CD8-positive, alpha-beta memory T cell (primary cell): ENCODE measurements at regions of chr19 and their contacts with region 1.

Region 1: DNA sequence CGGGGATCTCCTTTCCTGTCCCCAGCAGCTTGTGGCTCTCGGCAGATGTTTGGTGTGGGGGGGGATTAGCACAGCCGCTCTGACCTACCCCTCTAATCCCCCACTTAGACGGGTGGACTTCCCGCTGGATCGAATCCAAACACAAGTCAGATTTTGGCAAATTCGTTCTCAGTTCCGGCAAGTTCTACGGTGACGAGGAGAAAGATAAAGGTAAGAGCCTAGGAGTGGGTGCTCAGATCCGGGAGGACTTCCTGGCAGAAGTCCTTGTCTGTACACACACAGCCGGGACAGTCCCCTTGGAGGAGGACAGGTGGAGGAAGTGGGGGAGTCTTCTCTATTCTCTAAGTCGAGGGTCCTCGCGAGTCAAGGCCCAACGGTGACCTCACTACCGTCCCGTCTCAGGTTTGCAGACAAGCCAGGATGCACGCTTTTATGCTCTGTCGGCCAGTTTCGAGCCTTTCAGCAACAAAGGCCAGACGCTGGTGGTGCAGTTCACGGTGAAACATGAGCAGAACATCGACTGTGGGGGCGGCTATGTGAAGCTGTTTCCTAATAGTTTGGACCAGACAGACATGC is 705 bp downstream of the CALR start:
- DNase-seq: peak in 4 of 5 donors; percentile 19 to 62 (median 39)
- H3K4me3 ChIP-seq: peak overlapping the region; percentile 81
- H3K4me3 Mint-ChIP-seq: peak overlapping the region; percentile 94 to 99 (median 99)
- H3K27ac ChIP-seq: peak overlapping the region; percentile 93
- H3K27ac Mint-ChIP-seq: peak overlapping the region; percentile 91 to 100 (median 97)
- H3K4me1 ChIP-seq: peaks cover 39% of the 10 kb centered on the region
- H3K4me1 Mint-ChIP-seq: peaks cover 36 to 61% (median 40%) of the 10 kb centered on the region in 3 donors
- H3K27me3 ChIP-seq: no peaks in the 10 kb centered on the region
- H3K27me3 Mint-ChIP-seq: peaks cover 0 to 4% of the 10 kb centered on the region in 2 donors

Region 2: DNA sequence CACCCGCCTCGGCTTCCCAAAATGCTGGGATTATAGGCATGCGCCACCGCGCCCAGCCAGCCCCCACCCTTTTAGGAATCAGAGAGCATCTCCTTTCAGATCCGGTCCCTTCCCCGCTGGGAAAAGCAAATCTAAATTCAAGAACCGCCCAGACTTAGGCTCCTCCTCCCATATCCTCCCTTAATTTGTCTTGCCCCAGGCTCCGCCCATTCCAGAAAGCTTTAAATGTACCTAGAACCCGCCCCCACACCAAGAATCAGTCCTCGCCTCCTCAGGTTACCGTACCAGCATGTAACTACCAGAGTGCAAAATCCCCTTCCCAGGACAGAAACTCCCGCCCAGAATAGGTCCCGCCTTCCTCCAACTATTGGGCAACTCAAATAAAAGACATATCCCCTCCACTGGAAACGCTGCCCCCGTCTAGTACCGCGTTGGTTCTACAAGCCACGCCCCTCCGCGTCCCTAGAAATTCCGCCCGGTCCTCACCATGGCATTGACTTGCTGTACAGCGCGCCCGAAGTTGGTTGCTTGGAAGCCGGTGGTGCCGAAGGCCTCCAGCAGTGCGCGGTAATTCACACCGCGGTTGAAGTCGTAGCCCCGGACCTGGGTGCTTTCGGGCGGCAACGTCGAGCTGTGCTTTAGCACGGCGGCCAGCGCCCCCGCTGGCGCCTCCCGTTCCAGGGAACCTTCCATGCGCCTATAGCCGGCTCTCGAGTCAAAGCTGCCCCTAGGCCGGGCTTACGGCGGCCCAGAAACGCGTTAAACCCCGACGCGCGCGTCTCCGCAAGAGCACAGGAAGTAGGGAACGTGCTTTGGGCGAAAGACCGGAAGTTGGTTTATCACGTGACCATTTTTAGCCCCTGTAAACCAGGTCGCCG is 257.8 kb before region 1 on chr19 and contains the start of gene DHPS:
- CTCF ChIA-PET with region 1: no interaction called
- POLR2A ChIA-PET with region 1: no interaction called
- DNase-seq: peak; percentile 84 to 96 (median 91)
- H3K4me3 ChIP-seq: peak within 1 kb of the TSS; percentile 87
- H3K4me3 Mint-ChIP-seq: peak within 1 kb of the TSS; percentile 91 to 98 (median 95)
- H3K27ac ChIP-seq: peak within 1 kb of the TSS; percentile 84
- H3K27ac Mint-ChIP-seq: peak within 1 kb of the TSS; percentile 93 to 97 (median 96)
- H3K4me1 ChIP-seq: peaks cover 14% of the 10 kb centered on the region
- H3K4me1 Mint-ChIP-seq: peaks cover 16 to 34% (median 26%) of the 10 kb centered on the region in 3 donors
- H3K27me3 ChIP-seq: no peaks in the 10 kb centered on the region
- H3K27me3 Mint-ChIP-seq: peaks cover 0 to 4% of the 10 kb centered on the region in 2 donors
- total RNA-seq, gene DHPS: 113 to 116 TPM

Region 3: GRCh38 chr19:12872941-12873890 is 65.9 kb before region 1 on chr19:
- CTCF ChIA-PET with region 1: no interaction called
- POLR2A ChIA-PET with region 1: no interaction called
- DNase-seq: peak; percentile 29 to 75 (median 53)
- H3K4me3 ChIP-seq: no peak overlapping the region
- H3K4me3 Mint-ChIP-seq: peak overlapping the region in 6 of 7 donors; percentile 23 to 56 (median 48)
- H3K27ac ChIP-seq: no peak overlapping the region
- H3K27ac Mint-ChIP-seq: peak overlapping the region in 3 of 8 donors; percentile 15 to 54 (median 29)
- H3K4me1 ChIP-seq: no peaks in the 10 kb centered on the region
- H3K4me1 Mint-ChIP-seq: peaks cover 5 to 8% (median 6%) of the 10 kb centered on the region in 3 donors
- H3K27me3 ChIP-seq: no peaks in the 10 kb centered on the region
- H3K27me3 Mint-ChIP-seq: peaks cover 0 to 2% of the 10 kb centered on the region in 2 donors

Region 4: GRCh38 chr19:12928415-12928814 is 10.7 kb before region 1 on chr19:
- CTCF ChIA-PET with region 1: no interaction called
- POLR2A ChIA-PET with region 1: interaction called, 11 read pairs
- DNase-seq: no peak
- H3K4me3 ChIP-seq: no peak overlapping the region
- H3K4me3 Mint-ChIP-seq: no peak overlapping the region
- H3K27ac ChIP-seq: no peak overlapping the region
- H3K27ac Mint-ChIP-seq: no peak overlapping the region
- H3K4me1 ChIP-seq: peaks cover 16% of the 10 kb centered on the region
- H3K4me1 Mint-ChIP-seq: peaks cover 16 to 22% (median 18%) of the 10 kb centered on the region in 3 donors
- H3K27me3 ChIP-seq: no peaks in the 10 kb centered on the region
- H3K27me3 Mint-ChIP-seq: no peaks in the 10 kb centered on the region